Heart left ventricle (tissue), 16 donors: ENCODE measurements at regions of chr13 and their contacts with region 1.

Region 1: GRCh38 chr13:31909864-31910551 is 121.6 kb upstream of the FRY start:
- DNase-seq: peak in 4 of 5 donors; percentile 39 to 66 (median 50)
- ATAC-seq: peak; percentile 27 to 60 (median 44)
- H3K4me3 ChIP-seq: no peak overlapping the region
- H3K27ac ChIP-seq: peak overlapping the region in 9 of 12 donors; percentile 0 to 68 (median 37)
- H3K4me1 ChIP-seq: peaks cover 4 to 67% (median 37%) of the 10 kb centered on the region in 12 donors
- H3K27me3 ChIP-seq: no peaks in the 10 kb centered on the region
- CTCF ChIP-seq: peak; percentile 78 to 97 (median 92)
- POLR2A ChIP-seq: no peak

Region 2: GRCh38 chr13:31765138-31765785 is 144.7 kb before region 1 on chr13:
- intact Hi-C with region 1: no loop called
- DNase-seq: no peak
- ATAC-seq: no peak
- H3K4me3 ChIP-seq: no peak overlapping the region
- H3K27ac ChIP-seq: no peak overlapping the region
- H3K4me1 ChIP-seq: no peaks in the 10 kb centered on the region
- H3K27me3 ChIP-seq: peaks cover 0 to 4% (median 0%) of the 10 kb centered on the region in 9 donors
- CTCF ChIP-seq: no peak
- POLR2A ChIP-seq: no peak

Region 3: DNA sequence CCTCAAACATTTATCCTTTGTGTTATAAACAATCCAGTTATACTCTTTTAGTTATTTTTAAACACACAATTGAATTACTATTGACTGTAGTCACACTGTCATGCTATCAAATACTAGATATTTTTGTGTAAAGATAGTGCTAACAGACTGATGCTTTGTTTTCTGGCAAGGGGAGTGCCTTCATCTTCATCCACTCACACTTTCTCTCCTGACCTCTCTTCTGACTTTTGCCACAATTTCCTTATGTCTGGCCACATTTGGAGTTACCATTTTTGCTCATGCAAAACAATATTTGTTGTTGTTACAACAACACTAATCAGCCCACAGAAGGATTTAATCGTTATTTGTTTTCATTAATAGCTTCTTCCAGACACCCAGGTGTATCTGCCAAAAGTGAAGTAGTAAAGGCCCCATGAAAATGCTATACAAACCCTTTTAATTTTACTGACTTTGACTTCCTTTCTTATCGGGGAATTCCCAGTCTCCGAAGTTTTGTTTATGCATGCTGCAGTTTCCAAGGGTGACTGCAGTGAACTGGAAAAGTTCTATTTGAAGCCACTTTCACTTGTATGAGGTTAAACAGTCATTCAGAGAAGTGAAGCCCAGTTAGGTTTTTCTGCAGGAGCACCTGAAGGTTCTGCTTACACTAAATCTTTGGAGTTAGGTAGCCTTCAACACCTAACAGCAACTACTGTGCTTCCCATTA is 55.5 kb after region 1 on chr13:
- intact Hi-C with region 1: no loop called
- DNase-seq: no peak
- ATAC-seq: peak in 1 of 4 donors; percentile 54
- H3K4me3 ChIP-seq: no peak overlapping the region
- H3K27ac ChIP-seq: peak overlapping the region in 7 of 12 donors; percentile 5 to 44 (median 30)
- H3K4me1 ChIP-seq: peaks cover under 1 to 64% (median 40%) of the 10 kb centered on the region in 12 donors
- H3K27me3 ChIP-seq: no peaks in the 10 kb centered on the region
- CTCF ChIP-seq: no peak
- POLR2A ChIP-seq: no peak

Region 4: DNA sequence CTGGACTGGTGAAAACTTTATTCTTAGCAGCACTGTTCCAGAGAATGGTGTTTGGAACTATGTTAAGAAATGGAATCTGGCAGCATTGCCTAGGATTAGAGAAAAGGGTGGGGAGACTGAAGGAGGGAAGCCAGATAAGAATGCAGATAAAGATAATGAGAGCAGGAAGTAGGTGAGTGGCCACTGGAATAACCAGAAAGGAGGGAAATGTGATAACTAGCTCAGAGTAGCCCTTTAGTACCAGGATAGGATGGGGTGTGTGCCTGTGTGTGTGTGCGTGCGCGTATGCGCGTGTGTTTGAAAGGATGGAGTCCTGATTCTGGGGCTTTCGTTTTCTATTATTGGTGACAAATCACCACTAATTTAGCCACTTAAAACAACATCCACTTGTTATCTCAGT is 88.1 kb after region 1 on chr13:
- intact Hi-C with region 1: loop called in 1 of 10 experiments (anchors 10 kb)
- DNase-seq: no peak
- ATAC-seq: peak; percentile 7 to 46 (median 24)
- H3K4me3 ChIP-seq: no peak overlapping the region
- H3K27ac ChIP-seq: peak overlapping the region in 3 of 12 donors; percentile 30 to 45 (median 32)
- H3K4me1 ChIP-seq: peaks cover 0 to 30% (median 14%) of the 10 kb centered on the region in 12 donors
- H3K27me3 ChIP-seq: no peaks in the 10 kb centered on the region
- CTCF ChIP-seq: no peak
- POLR2A ChIP-seq: no peak

Region 5: DNA sequence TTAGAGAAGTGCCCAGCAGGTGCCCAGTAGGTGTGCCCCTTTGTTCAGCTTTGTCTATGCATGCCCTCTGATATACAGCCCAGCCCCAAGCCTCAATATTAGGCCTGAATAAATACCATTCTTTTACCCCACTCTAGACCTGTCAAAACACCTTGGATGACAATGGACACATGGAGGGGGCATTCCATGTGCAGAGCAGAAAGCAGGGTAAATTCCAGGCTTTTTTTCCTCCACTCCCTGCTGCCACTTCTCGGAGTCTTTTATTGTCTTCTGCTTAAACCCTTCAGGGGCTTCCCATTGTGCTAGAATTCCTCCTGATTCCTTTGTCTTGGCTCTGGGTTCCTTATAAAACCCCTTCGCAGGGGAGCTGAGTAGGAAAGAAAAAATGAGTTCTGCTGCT is 115.7 kb after region 1 on chr13:
- intact Hi-C with region 1: loop called in 1 of 10 experiments (anchors 5 kb)
- DNase-seq: no peak
- ATAC-seq: no peak
- H3K4me3 ChIP-seq: no peak overlapping the region
- H3K27ac ChIP-seq: no peak overlapping the region
- H3K4me1 ChIP-seq: peaks cover 3 to 28% (median 22%) of the 10 kb centered on the region in 12 donors
- H3K27me3 ChIP-seq: no peaks in the 10 kb centered on the region
- CTCF ChIP-seq: no peak
- POLR2A ChIP-seq: no peak

Region 6: GRCh38 chr13:32107474-32107873 is 197.5 kb after region 1 on chr13:
- intact Hi-C with region 1: no loop called
- DNase-seq: no peak
- ATAC-seq: peak in 2 of 4 donors; percentile 29 to 36
- H3K4me3 ChIP-seq: no peak overlapping the region
- H3K27ac ChIP-seq: peak overlapping the region in 1 of 12 donors; percentile 35
- H3K4me1 ChIP-seq: peaks cover 0 to 27% (median 3%) of the 10 kb centered on the region in 12 donors
- H3K27me3 ChIP-seq: no peaks in the 10 kb centered on the region
- CTCF ChIP-seq: no peak
- POLR2A ChIP-seq: no peak

Region 7: DNA sequence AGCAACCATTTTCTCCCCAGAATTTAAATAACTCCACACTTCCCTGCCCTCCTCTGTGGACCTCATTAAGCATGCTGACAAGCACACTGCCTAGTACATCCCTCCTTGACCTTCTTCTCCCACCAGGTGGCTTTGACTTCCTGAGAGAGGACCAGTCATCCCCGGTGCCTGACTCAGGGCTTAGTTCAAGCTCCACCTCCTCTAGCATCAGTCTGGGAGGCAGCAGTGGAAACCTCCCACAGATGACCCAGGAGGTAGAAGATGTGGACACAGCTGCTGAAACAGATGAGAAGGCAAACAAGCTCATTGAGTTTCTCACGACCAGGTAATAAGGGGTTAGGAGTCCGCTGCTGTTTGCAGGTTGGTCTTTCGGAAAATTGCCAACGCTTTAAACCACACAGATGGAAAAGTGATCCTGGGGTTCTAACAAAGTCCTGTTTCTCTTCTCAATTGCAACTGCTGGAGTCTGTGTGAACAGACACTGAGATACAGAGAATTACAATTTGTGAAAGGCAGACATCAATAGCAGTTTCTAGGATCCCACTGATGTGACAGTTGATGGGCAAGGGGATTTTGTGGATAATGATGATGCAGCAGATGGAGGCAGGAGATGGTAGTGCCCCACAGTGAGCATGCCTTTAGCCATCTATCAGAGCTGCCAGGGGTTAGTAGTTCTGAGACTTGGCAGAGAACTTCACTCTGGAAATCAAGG is 318.5 kb after region 1 on chr13:
- intact Hi-C with region 1: loop called in 1 of 10 experiments (anchors 10 kb)
- DNase-seq: no peak
- ATAC-seq: peak in 1 of 4 donors; percentile 27
- H3K4me3 ChIP-seq: no peak overlapping the region
- H3K27ac ChIP-seq: no peak overlapping the region
- H3K4me1 ChIP-seq: peaks cover 0 to 19% (median 4%) of the 10 kb centered on the region in 12 donors
- H3K27me3 ChIP-seq: no peaks in the 10 kb centered on the region
- CTCF ChIP-seq: no peak
- POLR2A ChIP-seq: no peak

Region 8: DNA sequence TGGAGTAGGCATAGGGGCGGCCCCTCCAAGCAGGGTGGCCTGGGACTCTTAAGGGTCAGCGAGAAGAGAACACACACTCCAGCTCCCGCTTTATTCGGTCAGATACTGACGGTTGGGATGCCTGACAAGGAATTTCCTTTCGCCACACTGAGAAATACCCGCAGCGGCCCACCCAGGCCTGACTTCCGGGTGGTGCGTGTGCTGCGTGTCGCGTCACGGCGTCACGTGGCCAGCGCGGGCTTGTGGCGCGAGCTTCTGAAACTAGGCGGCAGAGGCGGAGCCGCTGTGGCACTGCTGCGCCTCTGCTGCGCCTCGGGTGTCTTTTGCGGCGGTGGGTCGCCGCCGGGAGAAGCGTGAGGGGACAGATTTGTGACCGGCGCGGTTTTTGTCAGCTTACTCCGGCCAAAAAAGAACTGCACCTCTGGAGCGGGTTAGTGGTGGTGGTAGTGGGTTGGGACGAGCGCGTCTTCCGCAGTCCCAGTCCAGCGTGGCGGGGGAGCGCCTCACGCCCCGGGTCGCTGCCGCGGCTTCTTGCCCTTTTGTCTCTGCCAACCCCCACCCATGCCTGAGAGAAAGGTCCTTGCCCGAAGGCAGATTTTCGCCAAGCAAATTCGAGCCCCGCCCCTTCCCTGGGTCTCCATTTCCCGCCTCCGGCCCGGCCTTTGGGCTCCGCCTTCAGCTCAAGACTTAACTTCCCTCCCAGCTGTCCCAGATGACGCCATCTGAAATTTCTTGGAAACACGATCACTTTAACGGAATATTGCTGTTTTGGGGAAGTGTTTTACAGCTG is 405.4 kb after region 1 on chr13 and contains the starts of genes BRCA2 and ZAR1L:
- intact Hi-C with region 1: loop called in 7 of 10 experiments (anchors 2 to 10 kb)
- DNase-seq: peak; percentile 90 to 94 (median 91)
- ATAC-seq: peak; percentile 92 to 98 (median 98)
- H3K4me3 ChIP-seq: peak within 1 kb of the TSS; percentile 43 to 91 (median 79)
- H3K27ac ChIP-seq: peak within 1 kb of the TSS; percentile 74 to 99 (median 92)
- H3K4me1 ChIP-seq: peaks cover 0 to 29% (median 5%) of the 10 kb centered on the region in 12 donors
- H3K27me3 ChIP-seq: no peaks in the 10 kb centered on the region
- CTCF ChIP-seq: peak in 3 of 12 donors; percentile 13 to 18 (median 14)
- POLR2A ChIP-seq: peak in 1 of 2 donors; percentile 77
- total RNA-seq, gene BRCA2: 0.13 to 5.2 (median 0.42) TPM
- total RNA-seq, gene ZAR1L: not detected